ENCODE measurements at regions of chrX and their contacts with region 1.

Region 1: GRCh38 chrX:78517124-78517523 is 142.0 kb downstream of the RTL3 start:
- DNase-seq: peak in 8 of 9 donors; percentile 37 to 92 (median 84)
- ATAC-seq: peak; percentile 95
- H3K4me3 ChIP-seq: no peak overlapping the region
- H3K4me3 Mint-ChIP-seq: peak overlapping the region in 9 of 10 donors; percentile 16 to 73 (median 67)
- H3K27ac ChIP-seq: peak overlapping the region; percentile 72
- H3K27ac Mint-ChIP-seq: peak overlapping the region; percentile 90 to 97 (median 92)
- H3K4me1 ChIP-seq: peaks cover 16 to 25% of the 10 kb centered on the region in 2 donors
- H3K4me1 Mint-ChIP-seq: peaks cover 2 to 58% (median 39%) of the 10 kb centered on the region in 7 donors
- H3K27me3 ChIP-seq: no peaks in the 10 kb centered on the region
- H3K27me3 Mint-ChIP-seq: no peaks in the 10 kb centered on the region

Region 2: GRCh38 chrX:77776659-77777058 is 740.5 kb before region 1 on chrX:
- CTCF ChIA-PET with region 1: no interaction called
- POLR2A ChIA-PET with region 1: no interaction called
- intact Hi-C with region 1: loop called in 1 of 2 experiments (anchors 5 kb)
- DNase-seq: no peak
- ATAC-seq: no peak
- H3K4me3 ChIP-seq: no peak overlapping the region
- H3K4me3 Mint-ChIP-seq: peak overlapping the region in 3 of 10 donors; percentile 11 to 17 (median 13)
- H3K27ac ChIP-seq: no peak overlapping the region
- H3K27ac Mint-ChIP-seq: no peak overlapping the region
- H3K4me1 ChIP-seq: peaks cover 0 to 4% of the 10 kb centered on the region in 2 donors
- H3K4me1 Mint-ChIP-seq: peaks cover 12 to 54% (median 37%) of the 10 kb centered on the region in 7 donors
- H3K27me3 ChIP-seq: no peaks in the 10 kb centered on the region
- H3K27me3 Mint-ChIP-seq: no peaks in the 10 kb centered on the region

Region 3: GRCh38 chrX:78103623-78104446 is 413.3 kb before region 1 on chrX and contains the start of gene PGK1:
- CTCF ChIA-PET with region 1: no interaction called
- POLR2A ChIA-PET with region 1: no interaction called
- intact Hi-C with region 1: loop called (anchors 1 kb)
- DNase-seq: peak; percentile 76 to 96 (median 93)
- ATAC-seq: peak; percentile 97
- H3K4me3 ChIP-seq: peak within 1 kb of the TSS; percentile 98
- H3K4me3 Mint-ChIP-seq: peak within 1 kb of the TSS; percentile 89 to 99 (median 92)
- H3K27ac ChIP-seq: peak within 1 kb of the TSS; percentile 97
- H3K27ac Mint-ChIP-seq: peak within 1 kb of the TSS; percentile 90 to 97 (median 94)
- H3K4me1 ChIP-seq: peaks cover 21 to 27% of the 10 kb centered on the region in 2 donors
- H3K4me1 Mint-ChIP-seq: peaks cover 15 to 57% (median 48%) of the 10 kb centered on the region in 7 donors
- H3K27me3 ChIP-seq: no peaks in the 10 kb centered on the region
- H3K27me3 Mint-ChIP-seq: no peaks in the 10 kb centered on the region
- total RNA-seq, gene PGK1: 180 to 1,293 (median 217) TPM

Region 4: DNA sequence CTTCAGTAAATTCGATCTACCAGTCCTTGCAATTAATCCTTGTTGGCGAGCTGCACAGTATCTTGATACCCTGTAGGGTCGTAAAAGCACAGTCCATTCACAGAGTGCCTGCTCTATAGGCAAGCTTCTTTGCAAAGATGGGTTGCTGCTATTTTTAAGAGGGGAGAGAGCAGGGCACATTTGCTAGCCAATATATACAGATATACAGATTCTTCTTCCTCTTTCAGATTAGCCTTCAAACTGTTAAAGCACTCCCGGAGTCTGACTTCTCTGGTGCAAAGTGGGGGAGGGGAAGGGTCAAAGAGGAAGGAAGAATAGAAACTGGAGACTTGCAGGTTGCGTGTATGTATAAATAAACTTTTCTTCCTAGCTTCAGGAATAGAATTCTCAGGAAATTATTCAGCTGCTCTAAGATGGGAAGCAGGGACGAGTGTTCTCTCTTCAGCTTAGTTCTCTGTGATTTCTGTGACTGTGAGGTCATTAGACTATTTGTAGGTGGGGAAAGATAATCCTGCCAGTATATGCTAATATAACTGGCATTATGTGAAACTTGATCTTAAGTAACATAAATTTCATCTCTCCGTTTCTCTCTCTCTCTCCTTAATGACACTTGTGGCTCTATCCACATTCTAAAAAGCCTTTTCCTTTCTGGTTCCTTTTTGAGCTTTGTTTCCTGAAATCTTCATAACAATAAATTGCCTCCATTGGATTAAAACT is 189.6 kb before region 1 on chrX and contains the start of gene CYSLTR1:
- CTCF ChIA-PET with region 1: no interaction called
- POLR2A ChIA-PET with region 1: interaction called, 3 read pairs
- intact Hi-C with region 1: loop called in 1 of 2 experiments (anchors 2 kb)
- DNase-seq: no peak
- ATAC-seq: peak; percentile 44
- H3K4me3 ChIP-seq: peak within 1 kb of the TSS; percentile 47
- H3K4me3 Mint-ChIP-seq: peak within 1 kb of the TSS; percentile 78 to 97 (median 88)
- H3K27ac ChIP-seq: peak within 1 kb of the TSS; percentile 84
- H3K27ac Mint-ChIP-seq: peak within 1 kb of the TSS; percentile 82 to 99 (median 93)
- H3K4me1 ChIP-seq: peaks cover 9 to 23% of the 10 kb centered on the region in 2 donors
- H3K4me1 Mint-ChIP-seq: peaks cover 26 to 65% (median 62%) of the 10 kb centered on the region in 7 donors
- H3K27me3 ChIP-seq: no peaks in the 10 kb centered on the region
- H3K27me3 Mint-ChIP-seq: no peaks in the 10 kb centered on the region
- total RNA-seq, gene CYSLTR1: 13.7 to 71.9 (median 24.9) TPM

Region 5: GRCh38 chrX:78437621-78438020 is 79.5 kb before region 1 on chrX:
- CTCF ChIA-PET with region 1: no interaction called
- POLR2A ChIA-PET with region 1: no interaction called
- intact Hi-C with region 1: loop called in 1 of 2 experiments (anchors 10 kb)
- DNase-seq: no peak
- ATAC-seq: no peak
- H3K4me3 ChIP-seq: no peak overlapping the region
- H3K4me3 Mint-ChIP-seq: no peak overlapping the region
- H3K27ac ChIP-seq: no peak overlapping the region
- H3K27ac Mint-ChIP-seq: no peak overlapping the region
- H3K4me1 ChIP-seq: no peaks in the 10 kb centered on the region
- H3K4me1 Mint-ChIP-seq: peaks cover 0 to 2% (median 0%) of the 10 kb centered on the region in 7 donors
- H3K27me3 ChIP-seq: no peaks in the 10 kb centered on the region
- H3K27me3 Mint-ChIP-seq: no peaks in the 10 kb centered on the region

Region 6: GRCh38 chrX:78643096-78643495 is 126.0 kb after region 1 on chrX:
- CTCF ChIA-PET with region 1: no interaction called
- POLR2A ChIA-PET with region 1: no interaction called
- intact Hi-C with region 1: no loop called
- DNase-seq: no peak
- ATAC-seq: no peak
- H3K4me3 ChIP-seq: no peak overlapping the region
- H3K4me3 Mint-ChIP-seq: peak overlapping the region in 1 of 10 donors; percentile 58
- H3K27ac ChIP-seq: no peak overlapping the region
- H3K27ac Mint-ChIP-seq: peak overlapping the region in 1 of 9 donors; percentile 62
- H3K4me1 ChIP-seq: peaks cover 3 to 5% of the 10 kb centered on the region in 2 donors
- H3K4me1 Mint-ChIP-seq: peaks cover 7 to 17% (median 14%) of the 10 kb centered on the region in 7 donors
- H3K27me3 ChIP-seq: no peaks in the 10 kb centered on the region
- H3K27me3 Mint-ChIP-seq: no peaks in the 10 kb centered on the region

Region 7: GRCh38 chrX:78945186-78945912 is 428.2 kb after region 1 on chrX and contains the start of gene P2RY10:
- CTCF ChIA-PET with region 1: no interaction called
- POLR2A ChIA-PET with region 1: no interaction called
- intact Hi-C with region 1: loop called (anchors 1 to 2 kb)
- DNase-seq: peak in 8 of 9 donors; percentile 21 to 82 (median 75)
- ATAC-seq: peak; percentile 92
- H3K4me3 ChIP-seq: peak within 1 kb of the TSS; percentile 81
- H3K4me3 Mint-ChIP-seq: peak within 1 kb of the TSS; percentile 86 to 99 (median 92)
- H3K27ac ChIP-seq: peak within 1 kb of the TSS; percentile 86
- H3K27ac Mint-ChIP-seq: peak within 1 kb of the TSS; percentile 94 to 99 (median 98)
- H3K4me1 ChIP-seq: peaks cover 6 to 19% of the 10 kb centered on the region in 2 donors
- H3K4me1 Mint-ChIP-seq: peaks cover 15 to 62% (median 51%) of the 10 kb centered on the region in 7 donors
- H3K27me3 ChIP-seq: no peaks in the 10 kb centered on the region
- H3K27me3 Mint-ChIP-seq: no peaks in the 10 kb centered on the region
- total RNA-seq, gene P2RY10: 47.6 to 98.5 (median 67.4) TPM

Region 8: DNA sequence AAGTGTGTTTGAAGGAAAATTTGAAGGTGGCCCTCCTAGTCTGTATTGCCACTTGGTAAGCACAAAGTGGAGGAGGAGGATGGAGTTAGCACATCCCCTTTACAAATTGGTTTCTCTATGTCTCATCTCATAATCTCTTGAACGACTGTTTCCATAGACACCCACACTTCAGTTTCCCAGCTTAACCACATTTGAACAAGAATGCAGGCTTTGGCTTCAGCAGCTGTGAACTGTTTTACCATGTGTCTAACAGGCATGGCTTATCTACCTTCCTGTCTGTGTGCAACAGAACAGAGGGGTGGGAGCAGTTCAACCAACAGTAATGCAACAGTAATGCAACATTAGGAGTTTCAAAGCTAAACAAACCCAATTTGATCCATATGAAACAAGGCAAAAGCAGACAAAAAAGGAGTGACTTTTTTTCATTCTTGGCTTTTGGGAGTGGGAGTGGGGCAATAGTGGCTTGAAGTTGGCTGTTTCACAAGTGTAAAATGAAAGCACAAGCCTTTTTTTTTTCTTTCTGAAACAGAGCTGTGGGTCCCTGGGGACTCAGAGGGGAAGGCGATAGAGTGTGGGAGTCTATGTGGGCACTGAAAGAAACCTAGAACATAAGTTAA is 742.1 kb after region 1 on chrX:
- CTCF ChIA-PET with region 1: no interaction called
- POLR2A ChIA-PET with region 1: no interaction called
- intact Hi-C with region 1: loop called (anchors 2 kb)
- DNase-seq: peak; percentile 4 to 84 (median 74)
- ATAC-seq: peak; percentile 95
- H3K4me3 ChIP-seq: peak overlapping the region; percentile 23
- H3K4me3 Mint-ChIP-seq: peak overlapping the region; percentile 10 to 86 (median 79)
- H3K27ac ChIP-seq: peak overlapping the region; percentile 78
- H3K27ac Mint-ChIP-seq: peak overlapping the region; percentile 83 to 98 (median 94)
- H3K4me1 ChIP-seq: peaks cover 52 to 65% of the 10 kb centered on the region in 2 donors
- H3K4me1 Mint-ChIP-seq: peaks cover 26 to 90% (median 82%) of the 10 kb centered on the region in 7 donors
- H3K27me3 ChIP-seq: no peaks in the 10 kb centered on the region
- H3K27me3 Mint-ChIP-seq: no peaks in the 10 kb centered on the region

Measured in naive thymus-derived CD4-positive, alpha-beta T cell (primary cell).